Mammary epithelial cell (primary cell): ENCODE measurements at regions of chr7 and their contacts with region 1.

Region 1: GRCh38 chr7:98745722-98746318 is 124.0 kb downstream of the TMEM130 start:
- DNase-seq: peak; percentile 61
- H3K4me3 ChIP-seq: no peak overlapping the region
- H3K27ac ChIP-seq: no peak overlapping the region
- H3K4me1 ChIP-seq: no peaks in the 10 kb centered on the region
- H3K27me3 ChIP-seq: no peaks in the 10 kb centered on the region
- CTCF ChIP-seq: peak; percentile 82 to 85

Region 2: GRCh38 chr7:98420966-98421612 is 324.7 kb before region 1 on chr7:
- CTCF ChIA-PET with region 1: interaction called, 11 read pairs
- dilution Hi-C with region 1: no loop called
- in situ Hi-C with region 1: loop called in 1 of 2 experiments (anchors 25 kb)
- intact Hi-C with region 1: no loop called
- DNase-seq: peak; percentile 75
- H3K4me3 ChIP-seq: no peak overlapping the region
- H3K27ac ChIP-seq: no peak overlapping the region
- H3K4me1 ChIP-seq: peaks cover 31% of the 10 kb centered on the region
- H3K27me3 ChIP-seq: no peaks in the 10 kb centered on the region
- CTCF ChIP-seq: peak; percentile 99 to 100

Region 3: DNA sequence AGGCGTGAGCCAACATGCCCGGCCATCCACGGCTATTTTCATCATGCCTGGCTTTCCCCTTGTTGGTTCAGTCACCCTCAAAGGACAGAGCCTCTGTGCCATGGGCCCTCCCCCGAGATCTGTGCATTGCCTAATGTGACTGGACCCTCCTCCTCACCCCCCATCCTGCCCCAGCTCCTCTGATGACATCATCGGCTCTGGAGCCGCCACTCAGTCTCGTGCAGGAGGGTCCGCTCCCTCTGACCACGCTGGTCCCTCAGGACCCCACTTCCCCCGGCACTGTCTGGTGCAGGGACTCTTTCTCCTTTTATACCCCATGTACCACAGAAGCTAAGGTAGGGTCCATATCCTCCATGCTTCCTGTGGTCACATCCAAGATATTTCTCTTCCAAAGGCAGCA is 311.7 kb before region 1 on chr7:
- CTCF ChIA-PET with region 1: no interaction called
- dilution Hi-C with region 1: no loop called
- in situ Hi-C with region 1: loop called (anchors 10 to 25 kb)
- intact Hi-C with region 1: loop called (anchors 1 kb)
- DNase-seq: no peak
- H3K4me3 ChIP-seq: no peak overlapping the region
- H3K27ac ChIP-seq: no peak overlapping the region
- H3K4me1 ChIP-seq: no peaks in the 10 kb centered on the region
- H3K27me3 ChIP-seq: peaks cover 3% of the 10 kb centered on the region
- CTCF ChIP-seq: no peak